ENCODE measurements at regions of chr12 and their contacts with region 1.

Region 1: DNA sequence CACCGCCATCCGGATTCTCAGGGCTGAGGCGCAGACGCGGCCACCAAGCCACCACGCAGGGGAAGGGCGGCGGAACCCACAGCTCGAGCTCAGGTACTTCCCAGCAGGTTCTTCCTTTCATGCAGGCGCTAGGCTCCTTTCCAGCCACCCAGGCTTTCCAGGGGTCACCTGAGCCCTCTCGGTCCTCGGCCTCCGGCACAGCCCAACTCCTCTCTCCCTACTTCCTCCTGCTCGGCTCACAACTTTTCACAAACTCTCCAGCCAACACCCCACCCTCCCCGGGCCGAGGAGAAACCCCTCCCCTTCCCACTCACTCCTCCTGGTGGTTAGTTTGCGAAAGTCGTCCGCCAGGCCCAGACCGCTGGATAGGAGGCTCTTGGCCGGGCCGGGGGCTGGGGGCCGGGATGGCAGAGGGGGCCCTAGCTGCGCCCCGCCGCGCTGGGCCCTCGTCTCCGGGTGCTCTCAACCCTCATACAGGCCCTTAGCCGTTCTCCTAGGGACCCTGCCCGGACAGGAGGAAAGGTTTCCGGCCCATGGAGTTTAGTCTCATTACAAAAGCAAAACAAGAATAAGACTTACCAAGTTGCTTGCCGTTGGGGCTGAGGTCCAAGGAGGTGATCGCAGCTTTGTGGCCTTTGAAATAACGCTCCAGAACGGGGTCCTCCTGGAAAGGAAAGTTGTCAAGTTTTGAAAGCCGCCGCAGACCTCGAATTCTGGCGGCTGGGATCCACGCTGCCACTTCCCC is at the start of gene GALNT4:
- DNase-seq: peak; percentile 57 to 88 (median 68)
- ATAC-seq: peak; percentile 67
- H3K4me3 ChIP-seq: peak within 1 kb of the TSS; percentile 85
- H3K4me3 Mint-ChIP-seq: peak within 1 kb of the TSS; percentile 95
- H3K27ac ChIP-seq: peak within 1 kb of the TSS; percentile 80 to 84
- H3K27ac Mint-ChIP-seq: peak within 1 kb of the TSS; percentile 47
- H3K4me1 ChIP-seq: peaks cover 24% of the 10 kb centered on the region
- H3K4me1 Mint-ChIP-seq: peaks cover 58% of the 10 kb centered on the region
- H3K27me3 ChIP-seq: no peaks in the 10 kb centered on the region
- H3K27me3 Mint-ChIP-seq: no peaks in the 10 kb centered on the region
- CTCF ChIP-seq: peak; percentile 62
- total RNA-seq, gene GALNT4: 6.2 to 6.3 TPM

Region 2: GRCh38 chr12:88035271-88035906 is 1489.3 kb before region 1 on chr12:
- CTCF ChIA-PET with region 1: no interaction called
- POLR2A ChIA-PET with region 1: no interaction called
- intact Hi-C with region 1: loop called in 1 of 2 experiments (anchors 5 kb)
- DNase-seq: peak; percentile 70 to 92 (median 81)
- ATAC-seq: peak; percentile 96
- H3K4me3 ChIP-seq: peak overlapping the region; percentile 73
- H3K4me3 Mint-ChIP-seq: peak overlapping the region; percentile 97
- H3K27ac ChIP-seq: peak overlapping the region; percentile 57 to 59
- H3K27ac Mint-ChIP-seq: peak overlapping the region; percentile 91
- H3K4me1 ChIP-seq: peaks cover 17% of the 10 kb centered on the region
- H3K4me1 Mint-ChIP-seq: peaks cover 62% of the 10 kb centered on the region
- H3K27me3 ChIP-seq: no peaks in the 10 kb centered on the region
- H3K27me3 Mint-ChIP-seq: no peaks in the 10 kb centered on the region
- CTCF ChIP-seq: no peak

Region 3: DNA sequence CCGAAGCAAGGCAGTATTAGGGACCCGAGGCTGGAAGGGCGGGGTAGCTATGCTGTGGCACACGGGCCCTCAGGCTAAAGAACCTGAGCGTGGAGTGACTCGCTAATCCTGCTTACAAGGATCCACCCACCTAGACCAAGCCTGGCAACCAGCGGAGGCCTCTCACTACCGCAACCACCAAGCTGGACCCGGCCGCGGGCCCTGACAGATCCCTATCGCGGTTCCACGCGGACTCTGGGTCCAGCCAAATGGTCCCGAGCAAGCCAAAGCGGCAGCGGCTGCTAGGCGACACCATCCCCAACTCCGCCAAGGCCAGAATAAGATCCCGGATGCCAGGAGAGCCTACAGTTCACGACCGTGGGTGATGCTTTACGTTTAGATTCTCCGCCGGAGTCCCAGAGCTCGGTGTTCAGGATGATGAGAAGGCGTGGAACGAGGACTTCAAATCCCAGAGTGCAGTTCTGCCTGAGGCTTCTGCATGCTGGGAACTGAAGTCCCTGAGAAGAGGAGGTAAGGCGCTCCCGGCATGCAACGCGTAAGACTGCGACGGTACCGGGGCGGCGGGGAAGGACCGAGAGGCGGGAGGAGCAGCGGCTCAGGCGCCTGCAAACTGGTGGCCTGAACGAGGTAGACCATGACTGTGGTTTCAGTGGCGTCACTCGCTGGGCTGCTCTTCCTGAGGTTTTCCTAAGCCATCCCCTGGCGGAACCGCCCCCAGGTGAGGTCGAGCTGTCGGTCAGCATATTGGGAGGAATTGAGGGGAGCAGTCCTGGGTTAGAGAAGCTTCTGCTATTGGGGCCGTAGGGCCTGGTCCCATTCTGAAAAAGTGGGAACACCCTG is 1382.7 kb before region 1 on chr12 and contains the starts of genes CEP290 and TMTC3:
- CTCF ChIA-PET with region 1: no interaction called
- POLR2A ChIA-PET with region 1: interaction called, 3 read pairs
- intact Hi-C with region 1: loop called (anchors 10 kb)
- DNase-seq: peak; percentile 82 to 98 (median 88)
- ATAC-seq: peak; percentile 93
- H3K4me3 ChIP-seq: peak within 1 kb of the TSS; percentile 83
- H3K4me3 Mint-ChIP-seq: peak within 1 kb of the TSS; percentile 98
- H3K27ac ChIP-seq: peak within 1 kb of the TSS; percentile 82 to 84
- H3K27ac Mint-ChIP-seq: peak within 1 kb of the TSS; percentile 92
- H3K4me1 ChIP-seq: peaks cover 12% of the 10 kb centered on the region
- H3K4me1 Mint-ChIP-seq: peaks cover 69% of the 10 kb centered on the region
- H3K27me3 ChIP-seq: no peaks in the 10 kb centered on the region
- H3K27me3 Mint-ChIP-seq: no peaks in the 10 kb centered on the region
- CTCF ChIP-seq: no peak
- total RNA-seq, gene CEP290: 12.6 to 13.7 TPM
- total RNA-seq, gene TMTC3: 5.1 to 6.1 TPM

Region 4: GRCh38 chr12:89051065-89051677 is 473.5 kb before region 1 on chr12:
- CTCF ChIA-PET with region 1: no interaction called
- POLR2A ChIA-PET with region 1: no interaction called
- intact Hi-C with region 1: loop called (anchors 1 to 2 kb)
- DNase-seq: peak in 6 of 14 experiments; percentile 1 to 74 (median 42)
- ATAC-seq: peak; percentile 61
- H3K4me3 ChIP-seq: no peak overlapping the region
- H3K4me3 Mint-ChIP-seq: no peak overlapping the region
- H3K27ac ChIP-seq: no peak overlapping the region
- H3K27ac Mint-ChIP-seq: no peak overlapping the region
- H3K4me1 ChIP-seq: no peaks in the 10 kb centered on the region
- H3K4me1 Mint-ChIP-seq: no peaks in the 10 kb centered on the region
- H3K27me3 ChIP-seq: no peaks in the 10 kb centered on the region
- H3K27me3 Mint-ChIP-seq: no peaks in the 10 kb centered on the region
- CTCF ChIP-seq: peak; percentile 88

Region 5: DNA sequence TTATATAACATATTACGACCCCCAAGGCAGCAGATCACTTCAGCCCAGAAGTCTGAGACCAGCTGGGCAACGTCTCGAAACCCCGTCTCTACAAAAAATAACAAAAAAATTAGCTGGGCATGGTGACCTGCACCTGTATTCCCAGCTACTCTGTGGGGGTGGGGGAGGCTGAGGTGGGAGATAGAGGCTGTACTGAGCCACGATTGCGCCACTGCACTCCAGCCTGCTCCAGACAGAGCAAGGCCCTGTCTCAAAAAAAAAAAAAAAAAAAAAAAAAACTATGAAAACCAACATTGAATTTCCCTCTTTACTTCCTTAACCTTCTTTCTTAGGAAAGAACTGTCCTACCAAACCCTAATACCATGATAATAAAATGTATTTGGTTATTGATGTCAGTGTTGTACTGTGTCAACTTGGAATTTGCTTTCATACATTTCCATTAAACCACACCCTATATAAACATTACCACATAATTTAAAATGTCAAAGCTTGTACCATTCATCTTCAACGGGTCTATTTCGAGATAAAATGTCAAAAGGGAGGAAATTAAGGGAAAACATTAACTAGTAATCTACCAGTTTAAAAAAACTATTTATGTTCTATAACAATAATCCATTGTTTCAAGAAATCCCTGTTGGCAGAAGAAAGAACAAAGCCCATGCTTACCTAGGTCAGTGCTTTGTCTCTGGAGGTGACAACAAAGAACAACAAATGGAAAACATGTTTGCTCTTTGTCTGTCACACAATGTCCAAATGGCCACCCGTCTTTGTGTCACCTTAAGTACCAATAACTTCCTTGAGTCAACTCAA is 17.5 kb before region 1 on chr12:
- CTCF ChIA-PET with region 1: no interaction called
- POLR2A ChIA-PET with region 1: no interaction called
- intact Hi-C with region 1: loop called in 1 of 2 experiments (anchors 2 kb)
- DNase-seq: no peak
- ATAC-seq: no peak
- H3K4me3 ChIP-seq: no peak overlapping the region
- H3K4me3 Mint-ChIP-seq: no peak overlapping the region
- H3K27ac ChIP-seq: no peak overlapping the region
- H3K27ac Mint-ChIP-seq: no peak overlapping the region
- H3K4me1 ChIP-seq: no peaks in the 10 kb centered on the region
- H3K4me1 Mint-ChIP-seq: peaks cover 3% of the 10 kb centered on the region
- H3K27me3 ChIP-seq: no peaks in the 10 kb centered on the region
- H3K27me3 Mint-ChIP-seq: no peaks in the 10 kb centered on the region
- CTCF ChIP-seq: no peak

Region 6: DNA sequence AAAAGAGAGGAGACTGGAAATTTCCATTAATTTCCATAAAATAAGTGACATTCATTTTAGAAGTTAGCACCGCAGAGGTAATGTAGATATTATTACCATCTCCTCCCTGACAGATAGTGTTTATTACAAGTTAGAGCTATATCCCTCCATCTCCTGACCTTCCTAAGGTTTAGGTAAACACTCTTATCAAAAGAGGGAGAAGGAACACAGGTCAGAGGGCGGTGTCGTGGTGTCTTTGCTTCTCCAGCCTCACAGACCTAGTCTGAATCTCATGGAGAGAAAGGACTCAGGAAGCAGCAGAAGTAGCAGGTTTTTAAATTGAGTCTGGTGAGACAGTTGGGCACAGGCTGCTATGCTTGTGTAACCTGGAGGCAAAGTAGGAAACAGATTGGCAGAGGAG is 12.7 kb after region 1 on chr12:
- CTCF ChIA-PET with region 1: no interaction called
- POLR2A ChIA-PET with region 1: no interaction called
- intact Hi-C with region 1: no loop called
- DNase-seq: no peak
- ATAC-seq: no peak
- H3K4me3 ChIP-seq: no peak overlapping the region
- H3K4me3 Mint-ChIP-seq: no peak overlapping the region
- H3K27ac ChIP-seq: no peak overlapping the region
- H3K27ac Mint-ChIP-seq: no peak overlapping the region
- H3K4me1 ChIP-seq: no peaks in the 10 kb centered on the region
- H3K4me1 Mint-ChIP-seq: no peaks in the 10 kb centered on the region
- H3K27me3 ChIP-seq: no peaks in the 10 kb centered on the region
- H3K27me3 Mint-ChIP-seq: no peaks in the 10 kb centered on the region
- CTCF ChIP-seq: no peak